H1 (cell line): ENCODE measurements at regions of chr12 and their contacts with region 1.

Region 1: GRCh38 chr12:109775172-109775881 is 57.9 kb downstream of the TRPV4 start:
- DNase-seq: peak; percentile 31 to 91
- H3K4me3 ChIP-seq: no peak overlapping the region
- H3K27ac ChIP-seq: no peak overlapping the region
- H3K4me1 ChIP-seq: peaks cover 0 to 10% (median 3%) of the 10 kb centered on the region in 4 experiments; a peak in 2 of 7 replicates
- H3K27me3 ChIP-seq: no peaks in the 10 kb centered on the region
- CTCF ChIP-seq: peak; percentile 87 to 96 (median 91)
- EP300 ChIP-seq: no peak
- POLR2A ChIP-seq: no peak
- RAD21 ChIP-seq: peak; percentile 97

Region 2: DNA sequence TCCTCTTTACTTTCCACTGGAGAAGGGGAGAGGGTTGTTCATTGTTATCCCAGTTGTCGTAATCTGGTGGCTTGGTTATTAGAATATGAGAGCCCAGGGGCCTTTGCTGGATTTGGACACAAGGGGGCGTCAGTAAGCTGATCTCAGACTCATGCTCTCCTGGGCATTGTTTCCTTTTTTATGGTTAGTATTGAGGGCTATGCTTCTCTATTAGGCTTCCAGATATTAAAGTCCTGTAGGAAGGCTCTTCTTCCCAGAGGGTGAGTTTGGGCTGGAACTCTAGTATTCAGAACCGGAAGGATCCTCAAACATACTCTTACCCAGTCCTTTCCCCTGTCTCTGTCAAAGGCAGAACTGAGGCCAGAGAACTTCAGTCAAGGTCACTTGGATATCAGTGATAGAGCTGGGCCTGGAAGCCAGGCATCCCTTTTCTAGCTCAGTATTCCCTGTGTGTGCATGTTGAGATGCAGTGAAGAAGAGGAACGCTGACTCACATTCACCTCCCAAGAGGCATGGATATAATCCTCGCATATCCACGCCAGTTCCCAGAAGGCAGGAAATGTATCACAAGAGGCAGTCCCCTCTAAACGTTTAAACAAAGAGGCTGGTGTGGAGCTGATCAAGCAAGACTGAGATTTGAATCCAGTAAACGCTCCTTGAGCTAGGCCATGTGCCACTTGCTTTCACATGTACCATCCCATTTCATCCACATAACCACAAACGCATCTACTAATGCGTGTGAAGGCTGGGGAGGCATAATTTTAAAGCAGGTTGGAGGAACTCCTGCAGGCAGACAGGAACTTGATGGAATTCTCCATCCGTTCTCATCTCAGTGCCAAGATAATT is 256.3 kb before region 1 on chr12:
- CTCF ChIA-PET with region 1: interaction called, 75 read pairs
- POLR2A ChIA-PET with region 1: interaction called, 4 read pairs
- DNase-seq: peak in 1 of 2 experiments; percentile 86
- H3K4me3 ChIP-seq: no peak overlapping the region
- H3K27ac ChIP-seq: no peak overlapping the region
- H3K4me1 ChIP-seq: peaks cover 0 to 7% (median 0%) of the 10 kb centered on the region in 4 experiments; a peak in 1 of 7 replicates
- H3K27me3 ChIP-seq: no peaks in the 10 kb centered on the region
- CTCF ChIP-seq: peak; percentile 66 to 88 (median 77)
- EP300 ChIP-seq: no peak
- POLR2A ChIP-seq: no peak
- RAD21 ChIP-seq: peak; percentile 80 to 84

Region 3: GRCh38 chr12:109612975-109613502 is 162.3 kb before region 1 on chr12:
- CTCF ChIA-PET with region 1: interaction called, 13 read pairs
- POLR2A ChIA-PET with region 1: no interaction called
- DNase-seq: no peak
- H3K4me3 ChIP-seq: no peak overlapping the region
- H3K27ac ChIP-seq: no peak overlapping the region
- H3K4me1 ChIP-seq: peaks cover 0 to 3% (median 0%) of the 10 kb centered on the region in 4 experiments; a peak in 2 of 7 replicates
- H3K27me3 ChIP-seq: 0 out of 7 replicates have a peak, but pooled peaks cover 0 to 2% (median 0%) of the 10 kb centered on the region in 4 experiments
- CTCF ChIP-seq: peak in 1 of 3 experiments; percentile 47; a peak in 2 of 4 replicates
- EP300 ChIP-seq: no peak
- POLR2A ChIP-seq: no peak
- RAD21 ChIP-seq: peak; percentile 10 to 39; a peak in 1 of 4 replicates

Region 4: GRCh38 chr12:109736552-109737108 is 38.7 kb before region 1 on chr12:
- CTCF ChIA-PET with region 1: interaction called, 15 read pairs
- POLR2A ChIA-PET with region 1: interaction called, 3 read pairs
- DNase-seq: peak in 1 of 2 experiments; percentile 87
- H3K4me3 ChIP-seq: no peak overlapping the region
- H3K27ac ChIP-seq: no peak overlapping the region
- H3K4me1 ChIP-seq: peaks cover 5 to 11% (median 7%) of the 10 kb centered on the region in 4 experiments; a peak in 6 of 7 replicates
- H3K27me3 ChIP-seq: peaks cover 0 to 16% (median 9%) of the 10 kb centered on the region in 4 experiments; a peak in 4 of 7 replicates
- CTCF ChIP-seq: no peak
- EP300 ChIP-seq: no peak
- POLR2A ChIP-seq: no peak
- RAD21 ChIP-seq: 0 out of 4 replicates have a peak, but pooled peaks of 1 of the 2 experiments have one; percentile 6

Region 5: DNA sequence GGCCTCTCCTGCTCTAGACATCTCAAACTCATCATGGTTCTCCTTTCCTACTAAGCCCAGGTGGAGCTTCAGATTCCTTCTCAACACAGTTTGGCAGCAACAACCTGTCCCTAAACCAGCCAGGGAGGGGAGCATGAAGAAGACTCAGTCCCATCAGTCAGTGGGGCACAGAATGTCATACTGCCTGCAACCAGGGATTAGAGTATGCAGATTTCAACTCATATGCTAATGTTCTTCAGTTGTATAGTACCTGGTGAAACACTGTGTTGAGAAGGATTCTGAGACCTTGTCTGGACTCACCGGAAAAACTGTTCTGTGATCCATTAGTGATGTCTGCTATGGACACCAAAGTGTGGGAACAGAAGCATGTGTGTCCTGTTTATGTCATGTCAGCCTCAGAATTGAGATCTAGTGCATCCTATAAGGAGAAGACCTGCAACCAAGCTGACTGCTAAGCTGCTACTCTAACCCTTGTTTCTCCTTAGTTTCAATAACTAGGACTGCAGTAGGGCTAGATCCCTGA is 14.3 kb after region 1 on chr12:
- CTCF ChIA-PET with region 1: interaction called, 16 read pairs
- POLR2A ChIA-PET with region 1: interaction called, 3 read pairs
- DNase-seq: no peak
- H3K4me3 ChIP-seq: no peak overlapping the region
- H3K27ac ChIP-seq: no peak overlapping the region
- H3K4me1 ChIP-seq: no peaks in the 10 kb centered on the region; a peak in 1 of 7 replicates
- H3K27me3 ChIP-seq: no peaks in the 10 kb centered on the region
- CTCF ChIP-seq: no peak
- EP300 ChIP-seq: no peak
- POLR2A ChIP-seq: no peak
- RAD21 ChIP-seq: no peak